IMR-90 (cell line): ENCODE measurements at regions of chr1 and their contacts with region 1.

Region 1: DNA sequence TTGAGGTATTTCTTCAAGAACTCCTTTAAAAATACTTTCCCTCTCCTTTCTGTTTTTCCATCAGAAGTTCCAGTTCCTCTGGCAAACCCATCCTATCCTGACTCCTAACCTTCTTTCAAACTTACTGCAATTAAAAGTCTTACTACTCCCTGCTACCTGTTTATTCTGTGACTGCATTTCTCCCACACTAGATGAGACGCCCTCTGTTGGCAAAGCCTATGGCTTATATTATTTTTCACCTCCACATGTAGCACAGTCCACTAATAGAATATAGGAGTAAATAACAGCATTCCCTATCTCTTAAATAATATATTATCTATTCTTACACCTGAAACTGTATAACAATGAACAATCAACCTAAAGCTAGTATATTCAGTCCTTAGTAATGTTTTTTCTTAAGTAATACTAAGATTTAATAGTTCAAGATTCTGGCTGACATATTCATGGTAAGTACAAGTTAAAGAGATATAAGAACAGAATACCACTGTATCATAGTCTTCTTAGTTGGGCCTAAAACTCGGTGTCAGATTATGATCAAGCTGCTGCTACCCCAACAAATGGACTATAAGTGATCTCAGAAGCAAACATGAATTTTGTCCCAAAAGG is 54.8 kb downstream of the RAB3GAP2 start:
- DNase-seq: no peak
- ATAC-seq: no peak
- H3K4me3 ChIP-seq: no peak overlapping the region
- H3K27ac ChIP-seq: no peak overlapping the region
- H3K4me1 ChIP-seq: 0 out of 2 replicates have a peak, but pooled peaks cover 2% of the 10 kb centered on the region
- H3K27me3 ChIP-seq: no peaks in the 10 kb centered on the region
- CTCF ChIP-seq: 0 out of 2 replicates have a peak, but pooled peaks have one; percentile 9
- POLR2A ChIP-seq: no peak
- RAD21 ChIP-seq: no peak

Region 2: GRCh38 chr1:220046052-220046930 is 171.2 kb before region 1 on chr1 and contains the start of gene EPRS1:
- CTCF ChIA-PET with region 1: no interaction called
- POLR2A ChIA-PET with region 1: no interaction called
- dilution Hi-C with region 1: no loop called
- in situ Hi-C with region 1: no loop called
- intact Hi-C with region 1: no loop called
- DNase-seq: peak; percentile 99
- ATAC-seq: peak; percentile 100
- H3K4me3 ChIP-seq: peak within 1 kb of the TSS; percentile 85
- H3K27ac ChIP-seq: peak within 1 kb of the TSS; percentile 91
- H3K4me1 ChIP-seq: 0 out of 2 replicates have a peak, but pooled peaks cover 3% of the 10 kb centered on the region
- H3K27me3 ChIP-seq: no peaks in the 10 kb centered on the region
- CTCF ChIP-seq: peak; percentile 73
- POLR2A ChIP-seq: peak; percentile 57
- RAD21 ChIP-seq: peak; percentile 26; the same call in 1 of the 2 replicates
- total RNA-seq, gene EPRS1: 159 and 206 TPM in 2 replicates

Region 3: GRCh38 chr1:220391479-220391878 is 174.0 kb after region 1 on chr1:
- CTCF ChIA-PET with region 1: no interaction called
- POLR2A ChIA-PET with region 1: no interaction called
- dilution Hi-C with region 1: no loop called
- in situ Hi-C with region 1: no loop called
- intact Hi-C with region 1: no loop called
- DNase-seq: no peak
- ATAC-seq: no peak
- H3K4me3 ChIP-seq: no peak overlapping the region
- H3K27ac ChIP-seq: no peak overlapping the region
- H3K4me1 ChIP-seq: no peaks in the 10 kb centered on the region
- H3K27me3 ChIP-seq: no peaks in the 10 kb centered on the region
- CTCF ChIP-seq: no peak
- POLR2A ChIP-seq: no peak
- RAD21 ChIP-seq: no peak

Region 4: GRCh38 chr1:220527908-220528678 is 310.6 kb after region 1 on chr1 and contains the start of gene MARK1:
- CTCF ChIA-PET with region 1: no interaction called
- POLR2A ChIA-PET with region 1: no interaction called
- dilution Hi-C with region 1: no loop called
- in situ Hi-C with region 1: no loop called
- intact Hi-C with region 1: loop called (anchors 10 kb)
- DNase-seq: no peak
- ATAC-seq: peak; percentile 88
- H3K4me3 ChIP-seq: peak within 1 kb of the TSS; percentile 44
- H3K27ac ChIP-seq: no peak within 1 kb of the TSS
- H3K4me1 ChIP-seq: peaks cover 2% of the 10 kb centered on the region; the same call in 1 of the 2 replicates
- H3K27me3 ChIP-seq: peaks cover 37% of the 10 kb centered on the region
- CTCF ChIP-seq: no peak
- POLR2A ChIP-seq: no peak
- RAD21 ChIP-seq: no peak
- total RNA-seq, gene MARK1: not detected in 2 replicates